ENCODE measurements at regions of chr4 and their contacts with region 1.

Region 1: GRCh38 chr4:82900331-82901128 is at the start of gene THAP9:
- DNase-seq: peak; percentile 89 to 90
- H3K4me3 ChIP-seq: peak within 1 kb of the TSS; percentile 81 to 97 (median 89)
- H3K27ac ChIP-seq: peak within 1 kb of the TSS; percentile 89
- H3K4me1 ChIP-seq: peaks cover 0 to 2% (median 0%) of the 10 kb centered on the region in 4 experiments; a peak in 1 of 7 replicates
- H3K27me3 ChIP-seq: no peaks in the 10 kb centered on the region
- CTCF ChIP-seq: no peak
- EP300 ChIP-seq: no peak
- POLR2A ChIP-seq: peak; percentile 78 to 88
- RAD21 ChIP-seq: no peak
- total RNA-seq, gene THAP9: 13.2 and 17.0 TPM in 2 replicates

Region 2: GRCh38 chr4:83012687-83013419 is 112.3 kb after region 1 on chr4:
- CTCF ChIA-PET with region 1: interaction called, 5 read pairs
- POLR2A ChIA-PET with region 1: interaction called, 15 read pairs
- DNase-seq: peak; percentile 96
- H3K4me3 ChIP-seq: peak overlapping the region; percentile 67 to 98 (median 73)
- H3K27ac ChIP-seq: no peak overlapping the region
- H3K4me1 ChIP-seq: peaks cover 0 to 6% (median 3%) of the 10 kb centered on the region in 4 experiments; a peak in 3 of 7 replicates
- H3K27me3 ChIP-seq: peaks cover 0 to 6% (median 3%) of the 10 kb centered on the region in 4 experiments; a peak in 4 of 7 replicates
- CTCF ChIP-seq: peak; percentile 29 to 41 (median 41)
- EP300 ChIP-seq: peak in 1 of 2 experiments; percentile 100; a peak in 2 of 3 replicates
- POLR2A ChIP-seq: peak; percentile 45 to 72
- RAD21 ChIP-seq: peak; percentile 38 to 42

Measured in H1 (cell line).